Colonic mucosa (tissue), 4 donors: ENCODE measurements at regions of chr4 and their contacts with region 1.

Region 1: GRCh38 chr4:15488658-15489470 is 19.2 kb downstream of the CC2D2A start:
- DNase-seq: no peak
- H3K4me3 ChIP-seq: no peak overlapping the region
- H3K27ac ChIP-seq: no peak overlapping the region
- H3K4me1 ChIP-seq: no peaks in the 10 kb centered on the region
- H3K27me3 ChIP-seq: no peaks in the 10 kb centered on the region
- CTCF ChIP-seq: no peak

Region 2: GRCh38 chr4:15649914-15650545 is 161.2 kb after region 1 on chr4:
- intact Hi-C with region 1: loop called (anchors 10 kb)
- DNase-seq: peak; percentile 52
- H3K4me3 ChIP-seq: no peak overlapping the region
- H3K27ac ChIP-seq: no peak overlapping the region
- H3K4me1 ChIP-seq: peaks cover 8% of the 10 kb centered on the region
- H3K27me3 ChIP-seq: no peaks in the 10 kb centered on the region
- CTCF ChIP-seq: peak; percentile 62

Region 3: DNA sequence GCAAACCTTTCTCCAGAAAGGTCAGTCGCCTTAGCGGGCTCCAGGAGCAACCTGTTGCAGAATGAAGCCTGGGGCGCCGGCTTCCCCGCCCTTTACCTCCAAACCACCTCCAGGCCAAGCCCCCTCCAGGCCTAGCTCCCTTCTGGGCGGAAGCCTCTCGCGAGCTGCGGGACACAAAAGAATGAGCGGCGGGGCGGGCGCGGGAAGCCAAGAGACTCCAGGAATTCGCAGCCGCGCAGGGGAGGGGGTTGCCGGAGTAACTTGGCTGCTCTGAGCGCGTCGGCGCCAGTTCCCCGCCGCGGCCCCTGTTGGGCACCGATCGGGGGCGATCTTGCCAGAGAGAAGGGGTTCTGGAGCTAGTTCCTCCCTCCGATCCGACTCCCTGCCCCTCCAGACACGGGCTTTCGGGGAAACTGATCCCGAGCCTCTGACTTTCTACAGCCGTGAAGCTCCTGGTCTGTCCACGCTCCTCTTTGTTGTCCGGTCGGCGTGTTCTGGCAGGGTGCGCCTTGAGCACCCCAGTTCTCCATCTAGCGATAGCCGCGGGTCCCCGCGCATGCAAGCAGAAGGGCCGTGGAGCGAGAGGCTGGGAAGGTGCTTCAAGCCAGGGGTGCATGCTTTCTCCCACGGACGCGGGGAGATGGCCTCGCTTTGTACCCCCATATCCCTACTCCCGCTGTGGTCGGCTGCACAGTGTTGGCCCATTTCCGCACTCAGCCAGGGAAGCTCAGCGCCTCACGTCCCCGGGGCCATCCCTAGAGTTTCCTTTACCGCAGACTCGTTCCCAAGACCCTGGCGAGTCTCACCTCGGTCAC is 593.8 kb after region 1 on chr4:
- intact Hi-C with region 1: no loop called
- DNase-seq: peak; percentile 45
- H3K4me3 ChIP-seq: peak overlapping the region; percentile 57
- H3K27ac ChIP-seq: no peak overlapping the region
- H3K4me1 ChIP-seq: no peaks in the 10 kb centered on the region
- H3K27me3 ChIP-seq: peaks cover 11% of the 10 kb centered on the region
- CTCF ChIP-seq: no peak

Region 4: DNA sequence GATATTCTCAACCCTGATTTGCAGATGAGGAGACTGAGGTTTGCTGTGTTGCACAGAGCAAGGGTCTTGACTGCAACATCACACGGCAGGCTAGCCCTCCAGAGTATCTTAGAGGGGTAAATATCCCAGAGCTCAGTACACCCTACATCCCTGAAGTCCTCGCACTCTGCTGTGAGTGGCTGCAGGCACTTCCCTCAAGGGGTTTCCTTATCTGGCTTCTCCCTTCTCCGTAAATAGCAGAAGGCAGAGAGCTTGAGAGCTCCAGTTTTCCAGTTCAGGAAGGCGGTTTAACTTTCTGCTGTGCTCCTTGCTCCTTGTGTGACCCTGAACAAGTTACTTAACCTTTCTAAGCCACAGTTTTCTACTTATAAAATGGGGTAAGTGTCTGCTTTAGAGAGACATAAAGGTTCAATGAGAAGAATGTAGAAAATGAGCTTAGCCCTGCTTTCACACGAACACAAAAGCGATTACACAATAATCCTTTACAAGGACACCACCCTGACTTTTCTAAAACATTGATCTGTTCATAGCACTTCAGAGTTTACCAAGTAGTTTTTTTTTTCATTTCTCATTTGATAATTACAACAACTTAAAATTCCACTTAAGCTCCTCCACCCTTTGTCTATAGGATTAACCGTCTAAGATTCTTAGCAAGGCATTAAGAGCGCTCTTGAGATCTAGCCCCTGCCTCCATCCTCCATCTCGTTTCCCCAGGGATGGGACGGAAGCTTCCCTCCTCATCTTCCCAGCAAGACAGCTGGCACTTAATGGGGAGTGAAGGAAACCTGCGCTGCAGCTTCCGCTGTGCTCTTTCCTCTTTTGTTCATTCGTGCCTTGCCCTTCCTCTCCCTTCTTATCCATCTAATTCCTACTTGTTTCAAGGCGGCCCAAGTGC is 669.0 kb after region 1 on chr4:
- intact Hi-C with region 1: no loop called
- DNase-seq: peak; percentile 34
- H3K4me3 ChIP-seq: no peak overlapping the region
- H3K27ac ChIP-seq: peak overlapping the region; percentile 75
- H3K4me1 ChIP-seq: peaks cover 4% of the 10 kb centered on the region
- H3K27me3 ChIP-seq: no peaks in the 10 kb centered on the region
- CTCF ChIP-seq: no peak